PC-9 (cell line): ENCODE measurements at regions of chr9 and their contacts with region 1.

Region 1: GRCh38 chr9:12813960-12814876 is 39.4 kb downstream of the LURAP1L start:
- DNase-seq: peak; percentile 57 to 96
- H3K4me3 ChIP-seq: peak overlapping the region; percentile 38; the same call in 1 of the 2 replicates
- H3K27ac ChIP-seq: peak overlapping the region; percentile 100
- H3K4me1 ChIP-seq: peaks cover 33% of the 10 kb centered on the region
- H3K27me3 ChIP-seq: no peaks in the 10 kb centered on the region
- CTCF ChIP-seq: no peak

Region 2: DNA sequence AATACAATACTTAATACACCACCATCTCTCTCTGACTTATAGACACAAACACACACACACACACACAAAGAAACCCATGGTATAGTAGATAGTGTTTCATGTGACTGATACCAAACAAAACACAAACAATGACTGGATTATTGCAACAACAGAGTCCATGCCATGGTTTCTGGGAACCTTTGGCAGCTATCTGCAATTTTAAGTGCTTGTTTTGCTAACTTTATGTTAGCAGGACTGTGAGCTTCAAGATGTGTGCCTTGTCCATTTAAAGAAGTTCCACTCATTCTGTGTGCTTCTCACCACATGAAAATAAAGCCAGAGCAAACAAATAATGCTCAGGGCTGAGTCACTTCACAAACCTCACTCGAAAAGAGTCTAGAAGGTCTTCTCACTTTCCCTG is 54.5 kb before region 1 on chr9:
- CTCF ChIA-PET with region 1: no interaction called
- POLR2A ChIA-PET with region 1: no interaction called
- intact Hi-C with region 1: no loop called
- DNase-seq: no peak
- H3K4me3 ChIP-seq: no peak overlapping the region
- H3K27ac ChIP-seq: no peak overlapping the region
- H3K4me1 ChIP-seq: no peaks in the 10 kb centered on the region
- H3K27me3 ChIP-seq: no peaks in the 10 kb centered on the region
- CTCF ChIP-seq: no peak

Region 3: DNA sequence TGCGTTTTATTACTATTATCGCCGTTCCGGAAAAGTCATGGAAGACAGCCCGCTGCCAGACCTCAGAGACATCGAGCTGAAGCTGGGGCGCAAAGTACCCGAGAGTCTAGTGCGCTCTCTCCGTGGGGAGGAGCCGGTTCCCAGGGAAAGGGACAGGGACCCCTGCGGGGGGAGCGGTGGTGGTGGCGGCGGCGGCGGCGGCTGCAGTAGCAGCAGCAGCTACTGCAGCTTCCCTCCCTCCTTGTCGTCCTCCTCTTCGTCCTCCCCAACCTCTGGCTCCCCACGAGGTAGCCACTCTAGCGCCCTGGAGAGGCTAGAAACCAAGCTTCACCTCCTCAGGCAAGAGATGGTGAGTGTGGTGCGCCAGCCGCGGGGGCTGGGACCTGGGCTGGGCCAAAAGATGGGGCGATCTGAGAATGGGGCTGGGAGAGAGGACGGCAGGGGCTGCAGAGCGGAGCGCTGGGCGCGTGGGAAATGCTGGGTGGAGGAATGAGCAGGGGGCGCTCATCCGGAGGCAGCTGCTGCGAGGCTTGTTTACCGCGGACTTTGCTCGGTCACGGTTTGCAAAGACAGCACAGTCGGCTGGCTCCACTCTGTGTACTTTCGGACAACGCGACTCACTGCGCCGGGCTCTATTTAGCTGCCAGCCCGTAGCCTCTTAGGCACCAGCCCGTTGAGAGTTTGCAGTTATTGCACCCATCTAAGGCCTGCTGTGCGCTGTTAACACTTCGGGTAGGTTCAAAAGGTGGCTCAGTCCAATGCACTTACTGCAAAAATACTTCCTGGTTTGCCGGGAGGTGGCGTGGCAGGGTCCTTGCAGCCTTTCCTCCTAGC is 38.3 kb before region 1 on chr9:
- CTCF ChIA-PET with region 1: interaction called, 6 read pairs
- POLR2A ChIA-PET with region 1: interaction called, 4 read pairs
- intact Hi-C with region 1: loop called (anchors 1 kb)
- DNase-seq: peak; percentile 64 to 65
- H3K4me3 ChIP-seq: peak overlapping the region; percentile 90
- H3K27ac ChIP-seq: peak overlapping the region; percentile 78
- H3K4me1 ChIP-seq: peaks cover 23% of the 10 kb centered on the region
- H3K27me3 ChIP-seq: no peaks in the 10 kb centered on the region
- CTCF ChIP-seq: peak; percentile 48; the same call in 1 of the 2 replicates

Region 4: GRCh38 chr9:12784461-12785259 is 29.6 kb before region 1 on chr9:
- CTCF ChIA-PET with region 1: no interaction called
- POLR2A ChIA-PET with region 1: interaction called, 5 read pairs
- intact Hi-C with region 1: loop called (anchors 1 kb)
- DNase-seq: peak; percentile 76 to 96
- H3K4me3 ChIP-seq: peak overlapping the region; percentile 29; the same call in 1 of the 2 replicates
- H3K27ac ChIP-seq: peak overlapping the region; percentile 100
- H3K4me1 ChIP-seq: peaks cover 35% of the 10 kb centered on the region
- H3K27me3 ChIP-seq: no peaks in the 10 kb centered on the region
- CTCF ChIP-seq: no peak

Region 5: GRCh38 chr9:12798066-12798770 is 16.0 kb before region 1 on chr9:
- CTCF ChIA-PET with region 1: no interaction called
- POLR2A ChIA-PET with region 1: no interaction called
- intact Hi-C with region 1: no loop called
- DNase-seq: no peak
- H3K4me3 ChIP-seq: no peak overlapping the region
- H3K27ac ChIP-seq: no peak overlapping the region
- H3K4me1 ChIP-seq: peaks cover 9% of the 10 kb centered on the region; the same call in 1 of the 2 replicates
- H3K27me3 ChIP-seq: no peaks in the 10 kb centered on the region
- CTCF ChIP-seq: no peak

Region 6: DNA sequence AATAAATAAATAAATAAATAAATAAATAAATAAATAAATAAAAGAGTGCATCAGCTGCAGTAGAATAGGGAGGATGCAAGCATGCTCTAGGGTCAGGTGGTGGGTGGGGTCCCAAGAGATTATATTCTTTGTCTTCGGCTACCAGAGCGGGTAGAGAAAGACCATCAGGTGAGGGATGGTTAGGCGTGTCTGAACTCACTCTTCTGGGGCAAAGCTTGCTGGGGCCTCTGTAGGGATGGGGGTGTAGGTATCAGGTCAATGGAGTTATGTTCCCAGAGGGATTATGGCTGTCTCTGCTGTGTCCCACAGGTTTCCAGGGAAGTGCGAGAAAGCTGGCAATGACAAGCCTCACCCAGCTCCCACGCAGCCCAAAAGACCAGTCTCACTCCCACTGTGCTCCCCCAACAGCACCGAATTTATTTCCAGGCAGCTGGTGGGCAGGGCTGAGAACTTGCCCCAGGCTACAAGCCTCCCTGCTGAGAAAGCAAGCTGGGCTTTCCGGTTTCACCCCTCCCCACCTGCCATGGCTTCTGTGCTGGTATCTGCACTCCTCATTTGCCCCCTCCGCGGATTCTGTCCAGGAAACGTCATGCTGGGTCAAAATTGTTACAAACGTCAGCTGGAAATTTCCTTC is 141.4 kb after region 1 on chr9:
- CTCF ChIA-PET with region 1: no interaction called
- POLR2A ChIA-PET with region 1: no interaction called
- intact Hi-C with region 1: loop called (anchors 10 kb)
- DNase-seq: peak; percentile 61 to 75
- H3K4me3 ChIP-seq: peak overlapping the region; percentile 26; the same call in 1 of the 2 replicates
- H3K27ac ChIP-seq: peak overlapping the region; percentile 99
- H3K4me1 ChIP-seq: peaks cover 24% of the 10 kb centered on the region
- H3K27me3 ChIP-seq: no peaks in the 10 kb centered on the region
- CTCF ChIP-seq: no peak